ENCODE measurements at regions of chr17 and their contacts with region 1.

Region 1: DNA sequence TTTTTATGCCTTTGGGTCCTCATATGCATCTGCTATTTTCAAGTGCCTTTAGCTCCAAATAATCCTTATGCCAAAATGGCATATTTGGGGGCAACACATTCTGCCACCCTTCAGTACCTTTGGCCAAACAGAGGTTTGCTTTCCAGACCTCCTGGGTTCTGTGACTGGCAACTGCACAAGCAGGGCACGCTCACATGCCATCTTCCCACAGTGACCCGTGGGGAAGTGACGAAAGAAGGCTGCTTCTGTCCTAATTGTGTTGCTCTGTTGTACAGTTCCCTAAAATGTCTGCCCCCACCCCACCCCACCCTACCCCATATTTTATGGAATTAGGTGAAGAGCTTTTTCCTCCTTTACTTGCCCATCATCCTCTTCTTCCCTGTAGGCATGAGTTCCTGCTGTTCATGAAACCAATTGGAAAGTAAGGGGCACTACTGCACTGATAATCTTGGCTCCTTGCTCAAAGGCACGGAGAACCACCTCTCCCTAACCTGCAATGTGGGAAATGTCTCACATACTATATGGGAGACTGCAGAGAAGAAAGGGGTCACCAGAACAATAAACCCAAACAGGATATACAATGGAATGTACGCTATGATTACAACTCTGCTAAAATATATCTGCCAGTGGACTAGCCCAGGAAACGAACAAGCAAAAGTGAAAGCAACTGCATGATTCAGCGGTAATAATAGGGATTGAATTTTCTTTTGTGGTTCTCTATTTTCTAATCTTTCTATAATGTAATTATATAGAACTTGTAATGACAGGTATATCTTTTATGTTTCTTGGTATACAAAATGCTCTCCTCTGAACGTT is 3.3 kb upstream of the SLFN12L start:
- DNase-seq: peak; percentile 49
- H3K4me3 ChIP-seq: peak overlapping the region in 3 of 4 donors; percentile 19 to 46 (median 24)
- H3K27ac ChIP-seq: peak overlapping the region; percentile 52 to 79 (median 69)
- H3K4me1 ChIP-seq: peaks cover 0 to 36% (median 6%) of the 10 kb centered on the region in 4 donors
- H3K27me3 ChIP-seq: no peaks in the 10 kb centered on the region
- CTCF ChIP-seq: no peak
- EP300 ChIP-seq: no peak
- POLR2A ChIP-seq: no peak

Region 2: DNA sequence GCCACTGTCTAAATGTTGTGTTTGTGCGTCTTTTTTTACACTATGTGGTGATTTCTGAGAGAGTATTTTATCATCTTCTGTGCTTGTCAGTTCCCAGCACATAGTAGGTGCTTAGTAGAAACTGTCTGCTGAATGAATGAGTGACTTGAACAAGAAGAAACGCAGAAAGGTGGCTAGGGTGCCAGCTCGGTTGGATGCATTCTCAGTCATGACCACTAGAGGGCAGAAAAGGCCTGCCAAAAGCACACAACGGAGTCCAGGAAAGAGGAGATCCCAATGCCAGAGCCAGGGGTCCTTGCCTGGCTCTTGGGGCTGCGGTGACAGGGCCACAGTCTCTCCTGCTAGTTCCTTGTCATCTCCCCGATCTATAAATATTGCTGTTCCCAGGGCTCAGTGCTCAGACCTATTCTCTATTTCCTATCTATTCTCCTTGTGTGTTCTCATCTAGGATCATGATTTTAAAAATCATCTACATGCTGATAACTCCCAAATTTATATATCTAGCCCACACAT is 1120.5 kb before region 1 on chr17:
- in situ Hi-C with region 1: loop called in 1 of 4 experiments (anchors 25 kb)
- intact Hi-C with region 1: no loop called
- DNase-seq: peak; percentile 67
- H3K4me3 ChIP-seq: no peak overlapping the region
- H3K27ac ChIP-seq: no peak overlapping the region
- H3K4me1 ChIP-seq: peaks cover 0 to 3% (median 0%) of the 10 kb centered on the region in 4 donors
- H3K27me3 ChIP-seq: peaks cover 49% of the 10 kb centered on the region
- CTCF ChIP-seq: peak; percentile 84 to 97 (median 95)
- EP300 ChIP-seq: no peak
- POLR2A ChIP-seq: no peak

Region 3: DNA sequence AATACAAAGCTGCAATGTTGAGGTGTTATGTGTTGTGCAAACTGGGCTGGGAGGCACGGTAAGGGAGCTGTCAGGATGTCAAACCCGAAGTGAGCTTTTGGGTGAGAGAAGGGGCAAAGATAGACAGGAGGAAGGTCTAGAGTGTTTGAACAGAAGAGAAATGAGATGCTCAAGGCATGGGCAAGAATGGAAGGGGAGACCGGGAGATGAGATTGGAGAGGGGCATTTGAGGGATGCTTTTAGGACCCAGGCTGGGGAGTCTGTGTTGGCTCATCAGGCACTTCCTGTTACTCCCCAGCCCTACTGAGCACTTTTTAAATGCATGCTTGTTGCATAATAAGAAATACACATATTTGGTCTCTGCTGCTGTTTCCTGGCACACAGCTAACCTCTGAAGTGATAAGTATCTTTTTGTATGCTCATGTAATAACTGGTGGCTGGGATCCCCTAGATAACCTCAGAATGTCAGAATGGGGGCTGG is 379.5 kb before region 1 on chr17:
- in situ Hi-C with region 1: loop called in 3 of 4 experiments (anchors 10 to 25 kb)
- intact Hi-C with region 1: no loop called
- DNase-seq: no peak
- H3K4me3 ChIP-seq: no peak overlapping the region
- H3K27ac ChIP-seq: peak overlapping the region in 1 of 4 donors; percentile 6
- H3K4me1 ChIP-seq: no peaks in the 10 kb centered on the region
- H3K27me3 ChIP-seq: no peaks in the 10 kb centered on the region
- CTCF ChIP-seq: no peak
- EP300 ChIP-seq: no peak
- POLR2A ChIP-seq: no peak

Region 4: DNA sequence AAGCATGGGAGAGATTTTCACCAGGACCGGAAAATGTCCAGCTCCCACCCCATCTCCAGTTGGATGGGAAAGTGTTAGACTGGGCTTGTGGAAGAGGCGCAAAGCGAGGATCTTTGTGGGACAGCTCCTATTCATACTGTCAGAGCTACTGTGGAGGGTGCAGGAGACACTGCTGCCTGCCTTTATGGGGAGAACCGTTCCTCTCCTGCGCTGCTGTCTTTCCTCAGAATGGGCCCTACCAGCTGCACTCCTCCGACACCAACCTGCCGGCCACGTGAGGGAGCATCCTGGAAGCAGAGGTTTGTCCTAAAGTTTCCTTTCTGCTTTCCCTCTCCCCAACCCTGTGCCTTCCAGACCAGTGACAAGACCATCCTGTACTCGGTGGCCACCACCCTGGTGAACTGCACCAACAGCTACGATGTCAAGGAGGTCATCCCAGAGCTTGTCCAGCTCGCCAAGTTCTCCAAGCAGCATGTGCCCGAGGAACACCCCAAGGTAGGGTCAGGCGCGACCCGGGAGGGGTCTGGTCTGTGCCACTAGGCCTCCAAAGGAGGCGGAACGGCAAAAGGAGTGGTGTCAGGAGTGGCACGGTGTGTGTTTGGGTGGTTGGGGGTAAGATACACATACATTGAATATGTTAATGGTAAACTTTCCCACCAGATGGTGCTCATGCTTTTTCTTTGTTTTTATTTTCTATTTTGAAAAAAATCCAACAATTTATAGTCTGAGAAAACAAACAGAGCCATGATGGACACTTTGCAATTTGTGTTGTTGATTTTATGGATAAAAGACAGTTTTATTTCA is 369.6 kb before region 1 on chr17:
- in situ Hi-C with region 1: loop called (anchors 10 to 25 kb)
- intact Hi-C with region 1: loop called (anchors 10 kb)
- DNase-seq: no peak
- H3K4me3 ChIP-seq: no peak overlapping the region
- H3K27ac ChIP-seq: no peak overlapping the region
- H3K4me1 ChIP-seq: no peaks in the 10 kb centered on the region
- H3K27me3 ChIP-seq: no peaks in the 10 kb centered on the region
- CTCF ChIP-seq: peak in 4 of 5 experiments; percentile 18 to 26 (median 24)
- EP300 ChIP-seq: no peak
- POLR2A ChIP-seq: no peak

Region 5: GRCh38 chr17:35312790-35313711 is 227.7 kb before region 1 on chr17:
- in situ Hi-C with region 1: loop called (anchors 5 to 25 kb)
- intact Hi-C with region 1: loop called (anchors 2 kb)
- DNase-seq: peak; percentile 51
- H3K4me3 ChIP-seq: peak overlapping the region in 3 of 4 donors; percentile 6 to 29 (median 14)
- H3K27ac ChIP-seq: peak overlapping the region; percentile 36 to 65 (median 49)
- H3K4me1 ChIP-seq: peaks cover 0 to 11% (median 0%) of the 10 kb centered on the region in 4 donors
- H3K27me3 ChIP-seq: no peaks in the 10 kb centered on the region
- CTCF ChIP-seq: peak; percentile 74 to 79 (median 75)
- EP300 ChIP-seq: no peak
- POLR2A ChIP-seq: peak; percentile 18

Region 6: DNA sequence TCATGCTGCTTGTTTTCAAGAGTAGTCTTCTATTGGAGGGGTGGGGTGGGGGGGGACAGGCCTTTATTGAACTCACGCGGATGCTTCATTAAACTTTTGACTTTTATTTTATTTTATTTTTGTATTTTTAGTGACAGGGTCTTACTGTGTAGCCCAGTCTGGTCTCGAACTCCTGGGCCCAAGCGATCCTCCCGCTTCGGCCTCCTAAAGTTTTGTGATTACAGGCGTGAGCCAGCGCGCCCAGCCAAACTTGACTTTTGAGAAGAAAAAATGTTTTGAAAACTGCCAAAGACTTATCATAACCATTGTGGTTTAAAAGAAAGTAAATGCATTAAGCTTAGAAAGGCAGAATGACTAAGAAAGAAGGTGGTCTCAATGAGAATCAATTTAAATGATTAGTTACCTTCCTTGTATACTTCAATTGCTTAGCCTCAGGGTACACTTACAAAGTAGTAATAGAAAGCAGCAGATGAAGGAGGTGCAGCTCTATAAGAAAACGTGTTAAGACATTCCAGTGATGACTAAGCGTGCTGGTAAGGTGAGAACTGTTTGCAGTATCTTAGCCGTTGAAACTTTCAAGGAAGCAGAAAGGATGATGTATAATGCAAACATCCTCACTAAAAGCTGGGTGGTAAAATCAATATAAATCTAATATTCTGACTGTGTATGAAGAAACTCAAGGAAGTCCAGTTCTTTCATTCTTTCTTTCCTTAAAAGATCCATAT is 47.6 kb after region 1 on chr17:
- in situ Hi-C with region 1: no loop called
- intact Hi-C with region 1: no loop called
- DNase-seq: no peak
- H3K4me3 ChIP-seq: peak overlapping the region in 3 of 4 donors; percentile 62 to 82 (median 77)
- H3K27ac ChIP-seq: peak overlapping the region; percentile 90 to 96 (median 92)
- H3K4me1 ChIP-seq: peaks cover 5 to 47% (median 27%) of the 10 kb centered on the region in 4 donors
- H3K27me3 ChIP-seq: no peaks in the 10 kb centered on the region
- CTCF ChIP-seq: no peak
- EP300 ChIP-seq: no peak
- POLR2A ChIP-seq: peak; percentile 20

Region 7: DNA sequence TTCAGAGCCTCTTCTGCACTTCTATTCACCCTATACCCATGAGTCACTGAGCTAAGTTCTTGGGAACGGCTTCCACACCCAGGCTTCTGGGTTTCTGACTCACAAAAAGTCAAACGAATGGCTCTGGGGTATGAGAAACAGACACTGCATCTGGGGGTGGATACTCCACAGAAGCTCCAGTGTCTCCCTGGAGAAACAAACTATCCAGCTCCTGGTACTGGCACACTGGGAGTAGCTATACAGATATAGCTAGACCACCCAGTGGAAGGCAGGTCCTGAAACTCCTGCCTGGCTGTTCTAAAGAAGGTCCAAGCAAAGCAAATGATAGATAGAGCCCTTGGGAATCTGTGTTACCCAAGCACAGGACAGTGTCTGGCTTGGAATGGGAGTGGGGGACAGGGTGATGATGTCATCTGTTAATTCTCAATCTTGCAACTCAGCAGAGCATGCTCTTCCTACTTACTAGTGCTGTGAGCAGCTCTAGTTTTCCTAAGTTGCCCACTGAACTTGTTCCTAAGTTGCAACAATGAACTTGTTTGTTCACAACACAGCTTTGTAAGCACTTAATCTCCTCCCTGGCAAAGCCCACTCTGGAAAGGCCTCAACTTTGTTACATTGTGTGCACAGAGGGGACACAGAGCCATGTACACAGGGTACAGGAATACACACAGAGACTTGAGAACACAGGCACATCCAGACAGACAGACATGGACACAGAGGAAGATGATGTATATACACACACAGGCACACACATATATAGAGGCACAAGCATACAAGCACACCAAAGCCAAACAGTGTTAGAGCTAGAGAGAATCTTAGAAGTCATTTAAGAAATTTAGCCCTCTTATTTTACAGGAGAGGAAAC is 247.9 kb after region 1 on chr17:
- in situ Hi-C with region 1: no loop called
- intact Hi-C with region 1: no loop called
- DNase-seq: no peak
- H3K4me3 ChIP-seq: no peak overlapping the region
- H3K27ac ChIP-seq: peak overlapping the region; percentile 79 to 86 (median 83)
- H3K4me1 ChIP-seq: peaks cover 36 to 82% (median 64%) of the 10 kb centered on the region in 4 donors
- H3K27me3 ChIP-seq: no peaks in the 10 kb centered on the region
- CTCF ChIP-seq: no peak
- EP300 ChIP-seq: no peak
- POLR2A ChIP-seq: no peak

Measured in transverse colon (tissue), 4 donors.